MCF 10A (cell line): ENCODE measurements at regions of chr16 and their contacts with region 1.

Region 1: GRCh38 chr16:88569985-88570690 is at the start of gene ZC3H18:
- DNase-seq: peak; percentile 95
- H3K4me3 Mint-ChIP-seq: peak within 1 kb of the TSS; percentile 80
- H3K27ac Mint-ChIP-seq: peak within 1 kb of the TSS; percentile 75
- H3K4me1 Mint-ChIP-seq: no peaks in the 10 kb centered on the region
- H3K27me3 Mint-ChIP-seq: no peaks in the 10 kb centered on the region
- CTCF ChIP-seq: no peak
- total RNA-seq, gene ZC3H18: 34.4 and 40.5 TPM in 2 replicates

Region 2: DNA sequence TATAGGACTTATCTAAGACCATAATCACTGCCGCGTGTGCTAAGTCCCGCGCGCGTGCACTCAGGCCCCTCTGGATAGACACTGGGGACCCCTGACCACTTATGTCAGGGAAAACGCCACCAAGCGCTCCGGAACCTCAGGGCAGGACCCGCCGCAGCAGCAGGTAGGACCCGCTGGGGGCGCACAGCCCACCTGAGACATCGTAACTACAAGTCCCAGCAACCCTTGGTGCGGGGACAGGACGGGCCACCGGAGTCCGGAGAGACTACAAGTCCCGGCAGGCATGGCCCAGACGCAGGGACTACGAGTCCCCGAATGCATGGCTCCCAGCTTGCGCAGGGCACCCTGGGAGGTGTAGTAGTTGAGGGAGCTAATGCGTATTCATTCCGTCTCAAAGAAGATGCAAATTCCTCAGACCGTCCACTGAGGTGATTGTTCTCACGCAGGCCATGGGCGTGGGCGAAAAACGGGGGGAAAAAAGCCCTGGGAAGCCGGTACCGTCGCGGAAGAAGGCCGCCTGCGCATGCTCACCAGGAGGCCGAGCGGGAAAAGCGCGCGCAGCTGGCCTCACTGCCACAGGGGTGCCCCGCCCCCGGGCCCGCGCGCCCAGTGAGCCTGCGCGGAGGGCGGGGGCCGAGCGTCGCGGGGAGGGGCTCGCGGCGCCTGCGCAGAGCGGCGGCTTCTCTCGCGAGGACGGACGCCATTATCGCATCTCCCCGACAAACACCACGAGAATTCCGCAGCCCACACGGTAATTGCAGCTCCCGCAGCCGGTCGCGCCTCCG is 619.2 kb before region 1 on chr16 and contains the start of gene BANP:
- CTCF ChIA-PET with region 1: no interaction called
- POLR2A ChIA-PET with region 1: interaction called, 14 read pairs
- intact Hi-C with region 1: no loop called
- DNase-seq: peak; percentile 99
- H3K4me3 Mint-ChIP-seq: peak within 1 kb of the TSS; percentile 92
- H3K27ac Mint-ChIP-seq: peak within 1 kb of the TSS; percentile 97
- H3K4me1 Mint-ChIP-seq: peaks cover 21% of the 10 kb centered on the region
- H3K27me3 Mint-ChIP-seq: no peaks in the 10 kb centered on the region
- CTCF ChIP-seq: peak; percentile 27
- total RNA-seq, gene BANP: 38.2 and 41.5 TPM in 2 replicates

Region 3: GRCh38 chr16:88550246-88550661 is 19.9 kb before region 1 on chr16:
- CTCF ChIA-PET with region 1: no interaction called
- POLR2A ChIA-PET with region 1: no interaction called
- intact Hi-C with region 1: no loop called
- DNase-seq: no peak
- H3K4me3 Mint-ChIP-seq: no peak overlapping the region
- H3K27ac Mint-ChIP-seq: no peak overlapping the region
- H3K4me1 Mint-ChIP-seq: no peaks in the 10 kb centered on the region
- H3K27me3 Mint-ChIP-seq: peaks cover 27% of the 10 kb centered on the region
- CTCF ChIP-seq: no peak

Region 4: DNA sequence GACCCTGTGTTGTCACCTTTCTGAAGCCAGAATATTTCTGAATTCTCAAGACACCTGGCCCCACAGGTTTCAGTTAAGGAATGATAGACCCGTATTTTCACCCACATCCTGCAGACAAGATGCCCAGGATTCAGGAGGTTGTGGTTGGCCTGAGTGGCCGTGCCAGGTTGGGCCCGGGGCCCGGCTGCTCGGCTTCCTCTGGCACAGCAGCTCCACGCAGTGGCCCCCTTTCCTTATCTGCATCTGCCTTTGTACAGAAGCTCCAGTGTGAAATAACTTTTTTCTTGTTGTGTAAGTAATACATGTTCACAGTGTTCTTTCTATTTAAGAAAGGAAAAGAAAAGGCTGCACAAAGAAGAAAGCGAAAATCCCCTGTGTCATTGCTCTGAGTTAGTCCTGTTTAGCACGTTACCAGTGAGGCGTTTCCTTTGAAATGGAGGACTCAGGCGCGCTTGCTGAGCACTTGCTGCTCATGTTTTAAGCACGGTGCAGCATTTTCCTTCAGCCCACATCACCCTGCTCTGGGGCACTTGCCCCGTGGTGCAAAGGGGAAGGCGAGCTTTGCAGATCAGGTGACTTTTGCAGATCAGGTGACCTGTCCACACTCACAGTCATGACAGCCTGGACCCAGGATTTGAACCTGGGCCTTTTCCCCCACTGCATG is 12.9 kb after region 1 on chr16:
- CTCF ChIA-PET with region 1: no interaction called
- POLR2A ChIA-PET with region 1: interaction called, 10 read pairs
- intact Hi-C with region 1: no loop called
- DNase-seq: no peak
- H3K4me3 Mint-ChIP-seq: no peak overlapping the region
- H3K27ac Mint-ChIP-seq: no peak overlapping the region
- H3K4me1 Mint-ChIP-seq: peaks cover 6% of the 10 kb centered on the region
- H3K27me3 Mint-ChIP-seq: no peaks in the 10 kb centered on the region
- CTCF ChIP-seq: no peak

Region 5: GRCh38 chr16:88706288-88706964 is 136.3 kb after region 1 on chr16 and contains the starts of genes CTU2 and RNF166:
- CTCF ChIA-PET with region 1: no interaction called
- POLR2A ChIA-PET with region 1: interaction called, 12 read pairs
- intact Hi-C with region 1: no loop called
- DNase-seq: peak; percentile 79
- H3K4me3 Mint-ChIP-seq: peak within 1 kb of the TSS; percentile 75
- H3K27ac Mint-ChIP-seq: peak within 1 kb of the TSS; percentile 73
- H3K4me1 Mint-ChIP-seq: peaks cover 14% of the 10 kb centered on the region
- H3K27me3 Mint-ChIP-seq: no peaks in the 10 kb centered on the region
- CTCF ChIP-seq: no peak
- total RNA-seq, gene CTU2: 26.9 and 40.8 TPM in 2 replicates
- total RNA-seq, gene RNF166: 17.5 and 18.5 TPM in 2 replicates

Region 6: DNA sequence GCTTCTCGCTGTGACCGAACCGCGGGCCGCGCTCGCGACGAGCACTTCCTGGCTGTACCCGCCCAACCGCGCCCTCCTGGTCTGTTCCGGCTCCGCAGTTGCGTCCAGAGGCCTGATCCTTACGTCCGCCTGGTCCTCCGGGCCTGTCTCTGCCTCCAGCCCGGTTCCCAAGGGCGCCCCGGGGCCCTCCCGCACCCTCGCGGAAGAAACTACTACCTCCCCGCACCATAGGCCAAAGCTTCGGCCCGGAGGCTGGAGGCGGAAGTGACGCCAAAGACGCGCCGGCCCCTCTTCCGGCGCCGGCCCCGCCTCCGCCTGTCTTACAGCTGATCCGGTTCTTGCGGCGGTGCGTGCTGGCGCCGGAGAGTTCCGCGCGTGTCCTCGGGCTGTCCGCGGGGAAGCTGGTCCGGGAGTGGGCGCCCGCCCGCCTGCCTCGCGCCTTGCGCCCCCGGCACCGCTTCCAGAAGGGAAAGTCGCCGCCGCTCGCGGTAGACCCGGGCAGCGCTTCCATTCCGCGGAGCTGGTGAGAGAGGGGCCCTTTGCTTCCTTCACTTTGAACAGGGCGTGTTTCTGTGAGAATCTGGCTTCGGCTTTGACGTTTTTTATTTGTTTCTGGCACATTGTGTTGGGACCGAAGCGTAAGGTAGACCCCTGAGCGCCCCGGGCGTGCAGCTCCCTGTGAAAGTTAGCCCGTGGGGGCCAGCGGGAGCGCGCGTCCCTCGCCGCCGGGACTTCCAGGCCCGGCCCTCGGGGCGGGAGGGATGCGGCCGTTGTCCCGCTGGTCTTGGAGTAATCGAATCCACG is 647.5 kb after region 1 on chr16 and contains the start of gene ZNF778:
- CTCF ChIA-PET with region 1: no interaction called
- POLR2A ChIA-PET with region 1: interaction called, 13 read pairs
- intact Hi-C with region 1: no loop called
- DNase-seq: peak; percentile 78
- H3K4me3 Mint-ChIP-seq: peak within 1 kb of the TSS; percentile 88
- H3K27ac Mint-ChIP-seq: peak within 1 kb of the TSS; percentile 47
- H3K4me1 Mint-ChIP-seq: peaks cover 6% of the 10 kb centered on the region
- H3K27me3 Mint-ChIP-seq: no peaks in the 10 kb centered on the region
- CTCF ChIP-seq: no peak
- total RNA-seq, gene ZNF778: 13.5 and 15.8 TPM in 2 replicates